Dorsolateral prefrontal cortex (tissue), 120 donors: ENCODE measurements at regions of chr2 and their contacts with region 1.

Region 1: DNA sequence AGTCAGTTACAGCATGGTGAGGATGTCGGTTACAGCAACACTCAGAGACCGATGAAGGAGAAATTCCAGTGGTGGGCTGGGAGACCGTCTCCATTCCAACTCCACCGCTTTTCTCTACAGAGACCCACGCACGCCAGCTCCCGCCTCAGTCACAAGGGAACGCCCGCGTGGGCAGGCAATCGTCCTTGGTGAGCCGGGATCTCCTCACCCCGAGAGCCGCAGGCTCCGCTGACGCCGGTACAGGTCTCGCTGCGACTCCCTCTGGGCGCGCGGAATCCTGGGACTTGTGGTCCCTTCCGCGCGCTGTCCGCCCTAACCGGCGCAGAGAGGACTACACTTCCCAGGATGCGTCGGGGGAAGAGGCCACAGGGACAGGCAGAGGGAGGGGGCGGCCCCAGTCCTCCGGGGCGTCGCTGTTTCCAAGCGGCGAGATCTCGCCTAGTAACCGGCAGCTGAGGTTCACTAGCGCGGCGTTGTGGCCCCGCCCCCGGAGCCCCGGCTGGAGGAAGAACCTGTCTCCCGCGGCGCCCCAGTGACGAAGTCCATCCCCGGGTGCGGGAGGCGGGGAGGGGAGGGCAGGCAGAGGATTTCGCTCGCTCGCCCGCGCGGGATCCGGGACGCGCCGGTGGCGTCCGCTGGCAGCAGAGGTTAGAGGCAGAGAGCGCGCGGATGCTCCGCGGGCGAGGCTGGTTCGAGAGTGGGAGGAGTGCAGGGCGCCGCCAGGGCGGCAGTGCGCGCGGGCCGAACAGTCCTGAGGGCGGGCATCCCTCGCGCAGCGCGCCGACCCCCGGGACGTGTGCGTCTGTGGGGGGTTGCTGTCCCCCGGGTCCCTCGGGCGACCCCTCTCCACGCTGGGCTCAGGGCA is at the start of gene EML6:
- DNase-seq: peak; percentile 94 to 99 (median 98)
- H3K4me3 ChIP-seq: peak within 1 kb of the TSS; percentile 65 to 97 (median 90)
- H3K27ac ChIP-seq: peak within 1 kb of the TSS in 57 of 59 donors; percentile 18 to 90 (median 81)
- H3K27me3 ChIP-seq: no peaks in the 10 kb centered on the region
- CTCF ChIP-seq: peak in 46 of 56 donors; percentile 11 to 74 (median 37)
- total RNA-seq, gene EML6: 19.0 to 50.3 (median 33.2) TPM

Region 2: DNA sequence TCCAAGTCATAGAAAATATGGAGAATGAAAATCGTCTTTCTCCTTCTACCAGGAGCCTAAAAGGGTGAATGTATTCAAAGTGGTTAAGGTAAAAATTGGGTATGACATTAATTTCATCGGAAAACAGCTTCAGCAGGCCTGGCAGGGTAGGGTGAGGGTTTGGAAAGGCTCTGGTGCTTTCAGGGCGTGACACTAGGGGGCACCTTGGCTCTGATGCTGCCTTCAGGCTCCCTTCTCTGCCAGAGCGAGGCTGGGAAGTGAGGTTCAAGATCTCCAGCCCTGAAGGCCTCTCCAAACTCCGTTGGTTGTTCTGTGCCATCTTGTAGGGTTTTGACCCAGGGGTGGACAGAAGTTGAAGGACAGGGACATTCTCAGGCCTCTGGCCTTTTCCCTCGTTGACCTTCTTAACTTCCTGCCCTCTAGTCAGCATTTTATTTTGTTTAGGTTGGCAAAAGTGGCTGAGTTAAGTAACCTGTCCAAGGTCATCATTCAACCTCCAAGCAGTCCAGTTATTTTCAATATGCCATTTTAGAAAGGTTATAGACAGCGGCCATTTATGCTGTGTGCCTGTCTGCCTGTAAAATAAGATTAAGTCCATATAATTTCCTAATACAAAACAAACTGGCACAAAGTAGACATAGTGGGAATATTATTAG is 40.4 kb after region 1 on chr2:
- intact Hi-C with region 1: no loop called
- DNase-seq: no peak
- H3K4me3 ChIP-seq: no peak overlapping the region
- H3K27ac ChIP-seq: no peak overlapping the region
- H3K27me3 ChIP-seq: no peaks in the 10 kb centered on the region
- CTCF ChIP-seq: peak in 20 of 56 donors; percentile 9 to 43 (median 18)

Region 3: GRCh38 chr2:54803783-54804751 is 80.7 kb after region 1 on chr2:
- intact Hi-C with region 1: no loop called
- DNase-seq: no peak
- H3K4me3 ChIP-seq: no peak overlapping the region
- H3K27ac ChIP-seq: no peak overlapping the region
- H3K27me3 ChIP-seq: no peaks in the 10 kb centered on the region
- CTCF ChIP-seq: no peak

Region 4: GRCh38 chr2:54838585-54839035 is 115.2 kb after region 1 on chr2:
- intact Hi-C with region 1: loop called in 1 of 2 experiments (anchors 5 kb)
- DNase-seq: peak in 9 of 10 donors; percentile 28 to 80 (median 65)
- H3K4me3 ChIP-seq: peak overlapping the region in 1 of 59 donors; percentile 14
- H3K27ac ChIP-seq: peak overlapping the region in 46 of 59 donors; percentile 2 to 81 (median 50)
- H3K27me3 ChIP-seq: no peaks in the 10 kb centered on the region
- CTCF ChIP-seq: peak; percentile 75 to 97 (median 92)

Region 5: DNA sequence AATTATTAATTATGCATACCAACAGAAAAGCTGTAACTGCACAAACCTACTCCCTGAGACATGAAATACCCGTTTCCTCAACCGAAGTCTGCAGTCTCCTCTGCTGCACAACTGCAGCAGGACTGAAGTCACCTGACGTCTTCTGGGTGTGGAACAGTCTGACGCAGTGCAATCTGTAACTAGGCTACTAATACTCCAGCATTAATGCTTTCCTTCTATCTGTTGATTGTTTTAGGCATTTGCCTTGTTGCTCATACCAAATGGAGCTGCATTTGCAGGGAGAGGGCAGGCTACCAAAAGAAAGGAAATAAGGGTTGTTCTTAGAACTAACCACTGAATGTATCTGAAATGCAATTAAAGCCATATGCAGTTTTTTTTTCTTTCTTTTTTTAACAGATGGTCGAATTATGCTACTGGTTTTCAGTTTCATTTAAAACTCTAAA is 286.8 kb after region 1 on chr2:
- intact Hi-C with region 1: loop called in 1 of 2 experiments (anchors 10 kb)
- DNase-seq: peak in 9 of 10 donors; percentile 50 to 76 (median 62)
- H3K4me3 ChIP-seq: peak overlapping the region; percentile 33 to 73 (median 59)
- H3K27ac ChIP-seq: peak overlapping the region; percentile 5 to 90 (median 78)
- H3K27me3 ChIP-seq: no peaks in the 10 kb centered on the region
- CTCF ChIP-seq: peak in 7 of 56 donors; percentile 6 to 40 (median 12)

Region 6: GRCh38 chr2:55175254-55176025 is 452.1 kb after region 1 on chr2:
- intact Hi-C with region 1: loop called in 1 of 2 experiments (anchors 10 kb)
- DNase-seq: no peak
- H3K4me3 ChIP-seq: peak overlapping the region in 41 of 59 donors; percentile 1 to 50 (median 26)
- H3K27ac ChIP-seq: peak overlapping the region in 10 of 59 donors; percentile 2 to 49 (median 21)
- H3K27me3 ChIP-seq: no peaks in the 10 kb centered on the region
- CTCF ChIP-seq: peak; percentile 44 to 92 (median 73)

Region 7: DNA sequence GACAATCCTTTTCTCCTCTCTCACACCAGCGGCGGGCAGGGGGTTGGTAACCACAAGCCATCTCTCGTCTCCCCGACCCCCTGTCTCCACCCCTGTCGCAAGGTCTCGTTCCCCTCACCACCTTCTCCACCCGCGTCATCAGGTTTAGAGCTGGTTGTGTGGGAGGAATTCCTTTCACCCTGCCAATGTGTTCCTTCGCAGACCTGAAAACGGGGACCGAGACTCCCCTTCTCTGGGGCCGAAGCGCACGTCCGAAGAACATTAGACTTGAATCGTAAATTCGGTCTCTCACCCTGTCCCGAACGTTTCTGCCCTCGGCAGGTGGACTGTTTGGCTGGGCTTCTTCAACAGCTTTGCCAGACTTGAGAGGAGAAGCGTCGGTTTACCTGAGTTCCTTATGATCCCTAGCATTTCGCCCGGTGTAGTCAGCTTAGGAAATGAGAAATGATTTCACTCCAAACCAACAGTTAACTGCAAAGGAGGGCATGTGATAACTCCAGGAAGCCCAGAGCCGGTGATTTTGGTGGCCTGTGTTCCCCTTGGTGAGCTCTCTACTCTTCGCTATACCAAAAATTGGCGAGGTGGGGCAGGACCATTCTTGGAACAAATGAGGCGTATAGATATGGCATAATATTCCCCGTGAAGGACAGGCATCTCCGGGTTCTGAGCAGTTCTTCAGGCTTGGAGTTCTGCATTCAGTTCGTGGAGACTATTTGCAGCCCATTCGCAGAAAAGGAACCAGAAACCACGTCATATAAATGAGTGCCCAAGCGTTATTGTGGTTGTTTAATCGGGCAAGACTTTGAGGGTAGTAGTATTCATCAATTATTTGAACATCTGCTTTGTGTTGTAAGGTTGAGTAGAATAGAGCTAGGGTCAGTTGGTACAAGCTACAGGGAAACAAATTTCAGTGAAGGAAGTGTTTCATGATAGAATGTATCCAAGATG is 796.8 kb after region 1 on chr2:
- intact Hi-C with region 1: loop called in 1 of 2 experiments (anchors 10 kb)
- DNase-seq: peak in 4 of 10 donors; percentile 24 to 46 (median 34)
- H3K4me3 ChIP-seq: peak overlapping the region; percentile 62 to 99 (median 86)
- H3K27ac ChIP-seq: peak overlapping the region in 58 of 59 donors; percentile 28 to 97 (median 91)
- H3K27me3 ChIP-seq: no peaks in the 10 kb centered on the region
- CTCF ChIP-seq: no peak